Naive thymus-derived CD4-positive, alpha-beta T cell (primary cell): ENCODE measurements at regions of chrX and their contacts with region 1.

Region 1: DNA sequence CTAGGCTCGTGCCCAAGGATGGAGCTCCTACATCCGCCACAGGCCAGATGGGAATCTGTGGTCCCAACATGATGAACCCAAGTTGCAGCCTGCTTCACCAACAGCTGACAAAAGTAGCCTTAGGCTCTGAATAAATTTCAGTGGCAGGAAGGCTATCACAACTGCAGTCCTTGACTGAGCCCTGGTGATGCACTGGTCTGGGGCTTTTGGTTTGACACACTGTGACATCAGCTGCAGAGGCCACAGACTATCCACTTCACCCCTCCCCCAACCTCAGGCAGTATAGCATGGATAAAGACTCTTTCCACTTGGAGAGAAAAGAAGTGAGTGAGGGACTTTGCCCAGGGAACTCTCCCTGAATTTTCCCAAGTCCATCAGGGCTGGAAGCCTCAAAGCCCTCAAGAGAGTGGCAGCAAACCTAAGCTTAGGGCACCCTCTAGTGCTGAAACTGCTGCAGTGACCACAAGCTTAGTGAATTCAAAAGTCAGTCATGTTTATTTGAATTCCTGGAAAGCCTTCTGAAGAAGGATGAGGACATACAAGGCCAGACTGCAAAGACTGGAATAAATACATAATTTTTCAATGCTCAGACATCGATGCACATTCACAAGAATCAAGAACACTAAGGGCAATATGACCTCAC is 135.0 kb upstream of the TENT5D start:
- DNase-seq: peak in 1 of 9 donors; percentile 0
- ATAC-seq: no peak
- H3K4me3 ChIP-seq: no peak overlapping the region
- H3K4me3 Mint-ChIP-seq: no peak overlapping the region
- H3K27ac ChIP-seq: no peak overlapping the region
- H3K27ac Mint-ChIP-seq: no peak overlapping the region
- H3K4me1 ChIP-seq: no peaks in the 10 kb centered on the region
- H3K4me1 Mint-ChIP-seq: no peaks in the 10 kb centered on the region
- H3K27me3 ChIP-seq: no peaks in the 10 kb centered on the region
- H3K27me3 Mint-ChIP-seq: no peaks in the 10 kb centered on the region

Region 2: DNA sequence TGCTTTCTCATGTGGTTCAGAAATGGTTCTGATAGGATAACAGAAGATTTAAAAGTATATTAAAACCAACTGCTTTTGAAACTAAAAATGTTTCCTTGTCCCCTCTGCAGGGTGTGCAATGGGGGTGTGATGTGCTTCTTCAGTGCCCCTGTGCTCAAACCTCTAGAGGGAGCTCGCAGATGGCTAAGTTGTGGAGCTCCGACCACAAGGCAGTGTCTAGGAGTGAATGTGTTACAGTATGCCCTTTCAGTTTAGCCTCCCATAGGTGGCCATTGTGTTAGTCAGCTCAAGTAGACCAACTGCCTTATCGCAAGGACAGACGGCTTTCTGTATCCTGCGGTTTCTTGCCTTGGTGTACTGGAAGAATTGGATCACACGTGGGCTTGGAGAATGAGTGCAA is 265.5 kb after region 1 on chrX:
- CTCF ChIA-PET with region 1: no interaction called
- POLR2A ChIA-PET with region 1: no interaction called
- intact Hi-C with region 1: no loop called
- DNase-seq: no peak
- ATAC-seq: no peak
- H3K4me3 ChIP-seq: no peak overlapping the region
- H3K4me3 Mint-ChIP-seq: no peak overlapping the region
- H3K27ac ChIP-seq: no peak overlapping the region
- H3K27ac Mint-ChIP-seq: no peak overlapping the region
- H3K4me1 ChIP-seq: no peaks in the 10 kb centered on the region
- H3K4me1 Mint-ChIP-seq: no peaks in the 10 kb centered on the region
- H3K27me3 ChIP-seq: no peaks in the 10 kb centered on the region
- H3K27me3 Mint-ChIP-seq: no peaks in the 10 kb centered on the region

Region 3: GRCh38 chrX:81195712-81196111 is 910.5 kb after region 1 on chrX:
- CTCF ChIA-PET with region 1: no interaction called
- POLR2A ChIA-PET with region 1: no interaction called
- intact Hi-C with region 1: loop called in 1 of 2 experiments (anchors 10 kb)
- DNase-seq: peak in 8 of 9 donors; percentile 14 to 55 (median 40)
- ATAC-seq: peak; percentile 80
- H3K4me3 ChIP-seq: no peak overlapping the region
- H3K4me3 Mint-ChIP-seq: no peak overlapping the region
- H3K27ac ChIP-seq: no peak overlapping the region
- H3K27ac Mint-ChIP-seq: peak overlapping the region in 1 of 9 donors; percentile 7
- H3K4me1 ChIP-seq: no peaks in the 10 kb centered on the region
- H3K4me1 Mint-ChIP-seq: peaks cover 0 to 25% (median 15%) of the 10 kb centered on the region in 7 donors
- H3K27me3 ChIP-seq: no peaks in the 10 kb centered on the region
- H3K27me3 Mint-ChIP-seq: no peaks in the 10 kb centered on the region